ENCODE measurements at regions of chr1 and their contacts with region 1.

Region 1: GRCh38 chr1:212368073-212368484 is 46.6 kb downstream of the PACC1 start:
- DNase-seq: peak; percentile 64
- H3K4me3 Mint-ChIP-seq: no peak overlapping the region
- H3K27ac Mint-ChIP-seq: peak overlapping the region; percentile 56
- H3K4me1 Mint-ChIP-seq: no peaks in the 10 kb centered on the region
- H3K27me3 Mint-ChIP-seq: no peaks in the 10 kb centered on the region

Region 2: GRCh38 chr1:211830330-211831142 is 537.5 kb before region 1 on chr1 and contains the start of gene LPGAT1:
- CTCF ChIA-PET with region 1: no interaction called
- POLR2A ChIA-PET with region 1: no interaction called
- intact Hi-C with region 1: loop called (anchors 10 kb)
- DNase-seq: peak; percentile 77
- H3K4me3 Mint-ChIP-seq: peak within 1 kb of the TSS; percentile 86
- H3K27ac Mint-ChIP-seq: peak within 1 kb of the TSS; percentile 83
- H3K4me1 Mint-ChIP-seq: peaks cover 61% of the 10 kb centered on the region
- H3K27me3 Mint-ChIP-seq: no peaks in the 10 kb centered on the region
- total RNA-seq, gene LPGAT1: 31.8 to 34.7 TPM

Region 3: GRCh38 chr1:212062832-212063438 is 305.1 kb before region 1 on chr1:
- CTCF ChIA-PET with region 1: interaction called, 92 read pairs
- POLR2A ChIA-PET with region 1: no interaction called
- intact Hi-C with region 1: loop called (anchors 2 kb)
- DNase-seq: no peak
- H3K4me3 Mint-ChIP-seq: no peak overlapping the region
- H3K27ac Mint-ChIP-seq: no peak overlapping the region
- H3K4me1 Mint-ChIP-seq: peaks cover 4% of the 10 kb centered on the region
- H3K27me3 Mint-ChIP-seq: no peaks in the 10 kb centered on the region

Region 4: DNA sequence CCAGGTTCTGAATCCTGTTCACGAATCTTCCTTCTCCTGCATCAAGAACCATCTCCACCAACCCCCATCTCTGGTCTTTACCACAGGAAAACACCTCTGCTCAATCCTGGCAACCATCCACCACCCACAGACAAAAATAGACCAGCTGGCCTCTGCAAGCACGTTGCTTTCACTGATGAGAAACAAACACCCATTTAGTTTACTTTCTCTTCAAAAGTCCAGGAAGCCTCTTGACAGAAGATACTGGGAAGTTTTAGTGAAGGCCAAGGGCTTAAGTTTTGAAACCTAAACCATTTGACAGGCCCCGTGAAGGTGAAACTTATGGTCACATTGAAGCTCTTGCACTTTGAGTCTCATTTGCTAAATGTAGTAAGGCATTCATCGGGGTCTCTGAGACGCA is 205.4 kb before region 1 on chr1:
- CTCF ChIA-PET with region 1: no interaction called
- POLR2A ChIA-PET with region 1: no interaction called
- intact Hi-C with region 1: loop called (anchors 10 kb)
- DNase-seq: peak; percentile 52
- H3K4me3 Mint-ChIP-seq: no peak overlapping the region
- H3K27ac Mint-ChIP-seq: peak overlapping the region; percentile 30
- H3K4me1 Mint-ChIP-seq: peaks cover 29% of the 10 kb centered on the region
- H3K27me3 Mint-ChIP-seq: no peaks in the 10 kb centered on the region

Region 5: GRCh38 chr1:212291505-212292134 is 76.5 kb before region 1 on chr1:
- CTCF ChIA-PET with region 1: interaction called, 7 read pairs
- POLR2A ChIA-PET with region 1: interaction called, 3 read pairs
- intact Hi-C with region 1: loop called (anchors 2 kb)
- DNase-seq: no peak
- H3K4me3 Mint-ChIP-seq: no peak overlapping the region
- H3K27ac Mint-ChIP-seq: peak overlapping the region; percentile 47
- H3K4me1 Mint-ChIP-seq: peaks cover 81% of the 10 kb centered on the region
- H3K27me3 Mint-ChIP-seq: no peaks in the 10 kb centered on the region

Measured in activated CD4-positive, alpha-beta memory T cell treated with anti-CD3 and anti-CD28 coated beads for 36 hours (primary cell).